ENCODE measurements at regions of chr20 and their contacts with region 1.

Region 1: GRCh38 chr20:4227085-4227821 is 211.9 kb upstream of the RNF24 start:
- DNase-seq: no peak
- H3K4me3 ChIP-seq: no peak overlapping the region
- H3K27ac ChIP-seq: no peak overlapping the region
- H3K4me1 ChIP-seq: no peaks in the 10 kb centered on the region
- H3K27me3 ChIP-seq: no peaks in the 10 kb centered on the region
- CTCF ChIP-seq: no peak
- POLR2A ChIP-seq: no peak

Region 2: DNA sequence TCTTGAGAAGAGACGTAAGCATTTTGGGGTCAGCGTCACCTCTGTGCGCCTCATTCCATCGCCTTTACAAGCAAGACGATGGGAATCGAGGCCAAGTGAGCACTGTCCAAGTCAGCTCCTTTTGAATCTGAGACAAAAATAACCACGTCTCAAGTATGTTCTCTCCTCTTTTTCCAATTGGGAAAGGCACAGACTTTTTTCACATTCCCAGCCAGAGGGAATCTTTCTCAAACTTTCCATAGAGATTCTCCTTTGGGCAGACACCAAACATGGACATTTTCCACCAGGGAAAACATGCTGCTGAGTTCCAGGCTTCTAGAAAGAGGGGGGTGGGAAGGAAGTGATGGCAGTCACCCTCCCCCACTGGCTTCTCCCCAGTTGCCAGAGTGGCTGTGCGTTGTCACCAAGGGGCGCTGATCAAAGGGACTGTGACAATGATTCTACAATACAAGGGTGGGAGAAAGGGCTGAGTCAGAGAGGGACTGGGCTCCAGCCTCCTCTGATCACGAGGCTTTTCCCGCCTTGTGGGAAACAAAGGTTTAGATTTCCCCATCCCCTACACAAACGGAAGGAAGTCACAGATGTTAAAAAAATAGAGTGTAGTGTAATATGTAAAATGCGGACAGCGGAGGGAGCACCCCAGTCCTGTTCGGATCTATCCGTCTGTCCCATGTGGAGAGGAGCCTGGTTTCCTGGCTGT is 70.0 kb after region 1 on chr20:
- intact Hi-C with region 1: loop called (anchors 5 kb)
- DNase-seq: no peak
- H3K4me3 ChIP-seq: no peak overlapping the region
- H3K27ac ChIP-seq: peak overlapping the region; percentile 51 to 67
- H3K4me1 ChIP-seq: no peaks in the 10 kb centered on the region
- H3K27me3 ChIP-seq: no peaks in the 10 kb centered on the region
- CTCF ChIP-seq: no peak
- POLR2A ChIP-seq: no peak

Region 3: GRCh38 chr20:4375881-4376280 is 148.6 kb after region 1 on chr20:
- intact Hi-C with region 1: no loop called
- DNase-seq: no peak
- H3K4me3 ChIP-seq: no peak overlapping the region
- H3K27ac ChIP-seq: no peak overlapping the region
- H3K4me1 ChIP-seq: no peaks in the 10 kb centered on the region
- H3K27me3 ChIP-seq: no peaks in the 10 kb centered on the region
- CTCF ChIP-seq: no peak
- POLR2A ChIP-seq: no peak